Naive thymus-derived CD4-positive, alpha-beta T cell (primary cell): ENCODE measurements at regions of chr12 and their contacts with region 1.

Region 1: GRCh38 chr12:6039894-6040568 is 84.4 kb downstream of the VWF start:
- DNase-seq: peak in 8 of 9 donors; percentile 20 to 65 (median 49)
- ATAC-seq: peak; percentile 83
- H3K4me3 ChIP-seq: no peak overlapping the region
- H3K4me3 Mint-ChIP-seq: peak overlapping the region in 3 of 10 donors; percentile 7 to 68 (median 25)
- H3K27ac ChIP-seq: no peak overlapping the region
- H3K27ac Mint-ChIP-seq: no peak overlapping the region
- H3K4me1 ChIP-seq: no peaks in the 10 kb centered on the region
- H3K4me1 Mint-ChIP-seq: peaks cover 0 to 5% (median 4%) of the 10 kb centered on the region in 7 donors
- H3K27me3 ChIP-seq: no peaks in the 10 kb centered on the region
- H3K27me3 Mint-ChIP-seq: peaks cover 0 to 6% (median 0%) of the 10 kb centered on the region in 5 donors

Region 2: GRCh38 chr12:4997939-4998338 is 1042.1 kb before region 1 on chr12:
- CTCF ChIA-PET with region 1: no interaction called
- POLR2A ChIA-PET with region 1: no interaction called
- intact Hi-C with region 1: no loop called
- DNase-seq: no peak
- ATAC-seq: no peak
- H3K4me3 ChIP-seq: no peak overlapping the region
- H3K4me3 Mint-ChIP-seq: no peak overlapping the region
- H3K27ac ChIP-seq: no peak overlapping the region
- H3K27ac Mint-ChIP-seq: no peak overlapping the region
- H3K4me1 ChIP-seq: no peaks in the 10 kb centered on the region
- H3K4me1 Mint-ChIP-seq: no peaks in the 10 kb centered on the region
- H3K27me3 ChIP-seq: no peaks in the 10 kb centered on the region
- H3K27me3 Mint-ChIP-seq: peaks cover 6 to 47% (median 24%) of the 10 kb centered on the region in 5 donors

Region 3: DNA sequence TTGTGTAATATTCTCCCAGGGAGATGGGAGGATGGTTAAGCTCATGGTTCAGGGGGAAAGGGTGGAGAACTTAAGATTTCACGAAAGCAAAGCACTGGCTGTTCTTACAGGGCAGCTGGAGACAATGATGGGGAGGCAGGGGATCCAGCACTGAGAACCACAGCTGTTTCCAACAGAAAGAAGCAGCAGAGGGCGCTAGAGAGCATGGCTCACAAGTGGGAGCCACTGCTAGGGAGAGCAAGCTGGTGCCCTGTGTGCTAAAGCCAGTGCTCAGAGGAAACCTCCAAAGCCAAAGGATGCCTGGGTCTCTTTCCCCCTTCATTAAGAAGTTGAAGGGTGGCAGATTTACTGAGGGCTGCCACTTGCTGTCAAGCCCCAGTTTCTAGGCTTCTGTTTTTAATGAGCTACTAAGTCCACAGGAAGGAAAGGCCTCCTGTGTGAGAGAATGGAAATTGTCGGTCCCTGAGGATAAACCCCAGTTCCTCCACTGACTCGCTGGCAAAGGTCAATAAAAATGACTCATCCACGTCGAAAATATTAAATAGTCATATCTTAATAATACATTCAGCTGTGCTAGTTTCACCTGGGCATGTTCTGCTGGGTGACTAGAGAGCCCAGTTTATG is 294.7 kb before region 1 on chr12:
- CTCF ChIA-PET with region 1: interaction called, 4 read pairs
- POLR2A ChIA-PET with region 1: no interaction called
- intact Hi-C with region 1: loop called in 1 of 2 experiments (anchors 2 kb)
- DNase-seq: peak in 6 of 9 donors; percentile 17 to 54 (median 40)
- ATAC-seq: peak; percentile 58
- H3K4me3 ChIP-seq: no peak overlapping the region
- H3K4me3 Mint-ChIP-seq: no peak overlapping the region
- H3K27ac ChIP-seq: no peak overlapping the region
- H3K27ac Mint-ChIP-seq: peak overlapping the region in 1 of 9 donors; percentile 49
- H3K4me1 ChIP-seq: no peaks in the 10 kb centered on the region
- H3K4me1 Mint-ChIP-seq: peaks cover 0 to 38% (median 17%) of the 10 kb centered on the region in 7 donors
- H3K27me3 ChIP-seq: no peaks in the 10 kb centered on the region
- H3K27me3 Mint-ChIP-seq: peaks cover 0 to 7% (median 7%) of the 10 kb centered on the region in 5 donors

Region 4: GRCh38 chr12:5965950-5966383 is 74.1 kb before region 1 on chr12:
- CTCF ChIA-PET with region 1: interaction called, 3 read pairs
- POLR2A ChIA-PET with region 1: no interaction called
- intact Hi-C with region 1: loop called (anchors 1 kb)
- DNase-seq: peak in 8 of 9 donors; percentile 21 to 47 (median 30)
- ATAC-seq: peak; percentile 83
- H3K4me3 ChIP-seq: no peak overlapping the region
- H3K4me3 Mint-ChIP-seq: no peak overlapping the region
- H3K27ac ChIP-seq: no peak overlapping the region
- H3K27ac Mint-ChIP-seq: no peak overlapping the region
- H3K4me1 ChIP-seq: no peaks in the 10 kb centered on the region
- H3K4me1 Mint-ChIP-seq: peaks cover 0 to 4% (median 0%) of the 10 kb centered on the region in 7 donors
- H3K27me3 ChIP-seq: no peaks in the 10 kb centered on the region
- H3K27me3 Mint-ChIP-seq: peaks cover 3 to 15% (median 8%) of the 10 kb centered on the region in 5 donors

Region 5: DNA sequence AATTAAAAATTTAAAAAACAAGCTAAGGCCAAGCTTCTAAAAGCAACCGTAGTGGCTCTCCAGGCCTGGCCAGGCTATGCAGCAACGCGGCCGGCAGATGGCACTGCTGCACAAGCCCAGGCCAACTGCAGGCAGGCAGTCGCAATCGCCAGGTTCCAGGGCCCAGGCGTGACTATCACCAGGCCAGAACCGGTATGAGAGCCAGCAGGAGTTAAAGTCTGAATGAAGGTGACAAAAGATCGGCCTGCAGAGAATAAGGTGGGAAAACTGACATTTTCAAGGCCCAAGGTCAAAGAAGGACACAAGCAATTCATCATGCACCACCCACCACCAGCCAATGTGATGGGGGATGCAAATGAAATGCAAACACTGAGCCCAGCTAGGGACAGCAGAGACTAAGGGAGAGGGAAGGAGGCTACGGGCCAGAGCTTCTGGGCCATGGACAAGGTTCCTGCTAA is 51.3 kb before region 1 on chr12:
- CTCF ChIA-PET with region 1: interaction called, 64 read pairs
- POLR2A ChIA-PET with region 1: interaction called, 3 read pairs
- intact Hi-C with region 1: loop called (anchors 1 kb)
- DNase-seq: peak; percentile 30 to 76 (median 68)
- ATAC-seq: peak; percentile 92
- H3K4me3 ChIP-seq: no peak overlapping the region
- H3K4me3 Mint-ChIP-seq: no peak overlapping the region
- H3K27ac ChIP-seq: no peak overlapping the region
- H3K27ac Mint-ChIP-seq: no peak overlapping the region
- H3K4me1 ChIP-seq: no peaks in the 10 kb centered on the region
- H3K4me1 Mint-ChIP-seq: peaks cover 0 to 3% (median 0%) of the 10 kb centered on the region in 7 donors
- H3K27me3 ChIP-seq: no peaks in the 10 kb centered on the region
- H3K27me3 Mint-ChIP-seq: peaks cover 0 to 2% (median 0%) of the 10 kb centered on the region in 5 donors

Region 6: DNA sequence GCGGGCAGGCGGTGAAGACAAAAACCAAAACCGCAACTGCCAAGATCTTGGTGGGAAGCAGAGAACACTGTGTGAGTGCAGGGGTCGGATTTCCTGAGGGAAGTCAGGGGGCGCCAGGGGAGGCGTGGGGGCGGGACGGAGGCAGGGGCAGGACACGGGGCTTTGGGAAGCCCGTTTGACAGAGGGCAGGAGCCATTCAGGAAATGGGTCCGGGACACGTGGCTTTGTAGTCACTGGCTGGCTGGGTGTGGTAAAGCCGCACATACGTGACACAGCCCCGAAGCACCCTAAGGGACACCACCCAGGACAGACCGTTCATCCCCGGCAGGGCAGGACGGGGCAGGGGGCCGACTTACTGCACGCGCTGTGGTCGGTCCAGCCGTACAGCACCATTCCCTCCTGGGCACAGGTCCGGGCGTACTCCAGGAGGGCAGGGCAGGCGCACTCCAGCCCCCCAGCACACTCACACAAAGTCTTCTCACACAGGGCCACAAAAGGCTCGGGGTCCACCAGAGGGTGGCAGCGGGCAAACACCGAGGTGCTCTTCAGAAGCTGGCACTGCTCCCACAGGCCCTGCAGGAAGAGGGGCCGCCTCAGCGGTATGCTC is 35.1 kb after region 1 on chr12:
- CTCF ChIA-PET with region 1: no interaction called
- POLR2A ChIA-PET with region 1: no interaction called
- intact Hi-C with region 1: no loop called
- DNase-seq: peak in 6 of 9 donors; percentile 30 to 48 (median 40)
- ATAC-seq: peak; percentile 84
- H3K4me3 ChIP-seq: peak overlapping the region; percentile 32
- H3K4me3 Mint-ChIP-seq: peak overlapping the region; percentile 83 to 94 (median 89)
- H3K27ac ChIP-seq: no peak overlapping the region
- H3K27ac Mint-ChIP-seq: peak overlapping the region in 7 of 9 donors; percentile 32 to 94 (median 52)
- H3K4me1 ChIP-seq: peaks cover 9 to 18% of the 10 kb centered on the region in 2 donors
- H3K4me1 Mint-ChIP-seq: peaks cover 23 to 29% (median 27%) of the 10 kb centered on the region in 7 donors
- H3K27me3 ChIP-seq: no peaks in the 10 kb centered on the region
- H3K27me3 Mint-ChIP-seq: peaks cover 0 to 30% (median 5%) of the 10 kb centered on the region in 5 donors

Region 7: GRCh38 chr12:6285063-6285477 is 245.0 kb after region 1 on chr12:
- CTCF ChIA-PET with region 1: interaction called, 6 read pairs
- POLR2A ChIA-PET with region 1: no interaction called
- intact Hi-C with region 1: loop called in 1 of 2 experiments (anchors 1 kb)
- DNase-seq: peak; percentile 33 to 70 (median 56)
- ATAC-seq: peak; percentile 90
- H3K4me3 ChIP-seq: no peak overlapping the region
- H3K4me3 Mint-ChIP-seq: no peak overlapping the region
- H3K27ac ChIP-seq: no peak overlapping the region
- H3K27ac Mint-ChIP-seq: peak overlapping the region in 1 of 9 donors; percentile 20
- H3K4me1 ChIP-seq: no peaks in the 10 kb centered on the region
- H3K4me1 Mint-ChIP-seq: peaks cover 0 to 6% (median 4%) of the 10 kb centered on the region in 7 donors
- H3K27me3 ChIP-seq: peaks cover 0 to 2% of the 10 kb centered on the region in 2 donors
- H3K27me3 Mint-ChIP-seq: peaks cover 0 to 19% (median 13%) of the 10 kb centered on the region in 5 donors